Naive thymus-derived CD4-positive, alpha-beta T cell (primary cell): ENCODE measurements at regions of chr9 and their contacts with region 1.

Region 1: DNA sequence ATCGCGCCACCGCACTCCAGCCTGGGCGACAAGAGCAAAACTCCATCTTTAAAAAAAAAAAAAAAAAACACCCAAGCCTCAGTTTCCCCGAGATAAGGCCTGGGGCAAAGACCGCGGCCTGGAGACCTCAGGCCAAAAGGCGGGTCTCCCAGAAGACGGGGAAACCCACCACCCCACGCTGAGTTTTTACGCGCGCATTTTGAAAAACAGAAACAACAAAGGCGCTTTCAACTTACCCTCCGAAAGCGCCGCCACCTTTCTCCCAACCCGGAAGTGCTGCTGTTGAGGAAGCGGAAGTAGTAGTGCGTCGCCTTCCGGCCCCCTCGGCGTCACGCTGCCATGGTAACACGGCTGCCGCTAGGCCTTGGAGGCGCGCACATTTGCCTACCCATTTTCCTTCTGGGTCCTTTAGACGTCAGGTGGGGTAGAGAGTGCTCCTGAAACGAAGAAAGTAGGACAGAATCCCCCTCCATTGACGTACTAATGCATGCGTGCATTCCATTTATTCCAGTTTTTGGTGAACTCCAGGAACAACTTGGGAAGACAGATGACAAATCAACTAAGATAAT is at the start of gene TTF1:
- DNase-seq: peak; percentile 86 to 96 (median 93)
- ATAC-seq: peak; percentile 89
- H3K4me3 ChIP-seq: peak within 1 kb of the TSS; percentile 64
- H3K4me3 Mint-ChIP-seq: peak within 1 kb of the TSS; percentile 77 to 97 (median 92)
- H3K27ac ChIP-seq: peak within 1 kb of the TSS; percentile 74
- H3K27ac Mint-ChIP-seq: peak within 1 kb of the TSS; percentile 77 to 97 (median 90)
- H3K4me1 ChIP-seq: peaks cover 23 to 51% of the 10 kb centered on the region in 2 donors
- H3K4me1 Mint-ChIP-seq: peaks cover 42 to 62% (median 55%) of the 10 kb centered on the region in 7 donors
- H3K27me3 ChIP-seq: peaks cover 0 to 4% of the 10 kb centered on the region in 2 donors
- H3K27me3 Mint-ChIP-seq: peaks cover 10 to 27% (median 10%) of the 10 kb centered on the region in 5 donors
- total RNA-seq, gene TTF1: 10.6 to 26.0 (median 20.1) TPM

Region 2: DNA sequence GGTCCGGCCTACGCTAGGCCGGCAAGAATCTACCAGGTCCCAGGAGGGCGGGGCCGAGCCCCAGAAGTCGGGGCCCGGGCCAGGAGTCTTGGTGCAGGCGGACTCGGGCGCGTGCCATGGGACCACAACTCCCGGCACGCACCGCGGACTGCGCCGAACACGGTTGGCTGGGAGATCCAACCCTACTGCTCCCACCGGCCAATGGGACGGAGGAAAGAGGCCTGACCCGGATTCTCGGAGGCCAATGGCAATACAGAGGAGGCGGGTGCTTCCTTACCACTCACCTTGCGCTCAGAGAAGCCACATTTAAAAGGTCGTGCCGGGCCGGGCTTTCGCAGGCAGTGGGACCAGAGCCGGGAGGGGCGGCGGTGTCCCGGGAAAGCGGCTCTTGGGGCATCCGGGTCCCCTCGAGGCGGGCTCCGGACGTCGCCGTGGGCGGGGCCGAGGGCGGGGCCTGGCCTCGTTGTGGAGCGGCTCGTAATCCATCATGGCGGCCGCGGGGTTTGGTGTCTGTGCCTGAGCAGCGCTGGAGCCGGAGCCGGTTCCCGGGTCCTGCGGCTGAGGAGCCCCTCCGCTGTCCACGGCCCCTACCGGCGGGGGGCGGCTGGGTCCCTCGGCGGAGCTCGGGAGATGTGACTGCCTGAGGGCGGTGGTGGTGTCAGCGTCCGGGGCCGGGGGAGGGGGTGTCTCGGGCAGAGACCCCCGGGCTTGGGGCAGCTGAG is 1693.9 kb before region 1 on chr9:
- CTCF ChIA-PET with region 1: no interaction called
- POLR2A ChIA-PET with region 1: no interaction called
- intact Hi-C with region 1: loop called in 1 of 2 experiments (anchors 10 kb)
- DNase-seq: peak; percentile 92 to 97 (median 96)
- ATAC-seq: peak; percentile 98
- H3K4me3 ChIP-seq: peak overlapping the region; percentile 92
- H3K4me3 Mint-ChIP-seq: peak overlapping the region; percentile 90 to 99 (median 94)
- H3K27ac ChIP-seq: peak overlapping the region; percentile 99
- H3K27ac Mint-ChIP-seq: peak overlapping the region; percentile 91 to 97 (median 96)
- H3K4me1 ChIP-seq: peaks cover 22 to 31% of the 10 kb centered on the region in 2 donors
- H3K4me1 Mint-ChIP-seq: peaks cover 27 to 48% (median 37%) of the 10 kb centered on the region in 7 donors
- H3K27me3 ChIP-seq: no peaks in the 10 kb centered on the region
- H3K27me3 Mint-ChIP-seq: no peaks in the 10 kb centered on the region

Region 3: DNA sequence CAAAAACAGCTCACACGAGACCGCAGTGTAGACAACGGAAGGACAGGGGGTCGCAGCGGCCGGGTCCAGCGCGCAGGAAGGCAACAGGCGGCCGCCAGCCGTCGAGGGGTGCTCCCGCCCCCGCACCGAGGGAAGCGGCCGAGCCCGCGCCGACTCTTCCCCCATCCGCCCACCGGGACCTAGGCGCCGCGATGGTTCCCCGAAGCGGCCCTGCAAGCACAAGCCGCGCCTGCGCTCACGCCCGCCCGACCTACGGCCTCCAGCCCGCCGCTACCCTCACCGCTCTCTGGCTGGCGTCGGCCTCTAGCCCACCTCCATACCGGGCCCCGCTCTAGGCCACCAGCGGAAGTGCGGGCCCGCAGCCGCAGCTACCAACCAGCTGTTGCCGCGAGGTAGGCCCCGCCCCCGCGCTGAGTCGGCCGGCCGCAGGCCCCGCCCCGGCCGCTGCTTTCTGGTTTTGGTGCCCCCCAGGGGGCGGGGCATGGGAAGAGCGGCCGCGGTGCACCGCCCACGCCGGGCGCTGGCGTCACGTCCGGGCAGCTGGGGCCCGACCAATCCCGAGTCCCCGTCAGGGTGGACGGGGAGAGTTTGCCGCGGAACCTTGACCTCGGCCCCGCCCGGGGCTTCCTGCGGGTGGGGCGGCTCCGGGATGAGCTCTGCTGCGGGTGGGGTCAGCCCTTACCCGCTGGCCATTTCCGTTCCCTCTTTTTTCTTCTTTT is 51.8 kb before region 1 on chr9 and contains the start of gene SETX:
- CTCF ChIA-PET with region 1: no interaction called
- POLR2A ChIA-PET with region 1: interaction called, 5 read pairs
- intact Hi-C with region 1: loop called (anchors 1 kb)
- DNase-seq: peak; percentile 80 to 96 (median 88)
- ATAC-seq: peak; percentile 95
- H3K4me3 ChIP-seq: peak within 1 kb of the TSS; percentile 96
- H3K4me3 Mint-ChIP-seq: peak within 1 kb of the TSS; percentile 78 to 97 (median 94)
- H3K27ac ChIP-seq: peak within 1 kb of the TSS; percentile 94
- H3K27ac Mint-ChIP-seq: peak within 1 kb of the TSS; percentile 68 to 99 (median 97)
- H3K4me1 ChIP-seq: peaks cover 35 to 39% of the 10 kb centered on the region in 2 donors
- H3K4me1 Mint-ChIP-seq: peaks cover 24 to 48% (median 45%) of the 10 kb centered on the region in 7 donors
- H3K27me3 ChIP-seq: no peaks in the 10 kb centered on the region
- H3K27me3 Mint-ChIP-seq: peaks cover 0 to 3% (median 0%) of the 10 kb centered on the region in 5 donors
- total RNA-seq, gene SETX: 52.0 to 83.2 (median 70.2) TPM

Region 4: DNA sequence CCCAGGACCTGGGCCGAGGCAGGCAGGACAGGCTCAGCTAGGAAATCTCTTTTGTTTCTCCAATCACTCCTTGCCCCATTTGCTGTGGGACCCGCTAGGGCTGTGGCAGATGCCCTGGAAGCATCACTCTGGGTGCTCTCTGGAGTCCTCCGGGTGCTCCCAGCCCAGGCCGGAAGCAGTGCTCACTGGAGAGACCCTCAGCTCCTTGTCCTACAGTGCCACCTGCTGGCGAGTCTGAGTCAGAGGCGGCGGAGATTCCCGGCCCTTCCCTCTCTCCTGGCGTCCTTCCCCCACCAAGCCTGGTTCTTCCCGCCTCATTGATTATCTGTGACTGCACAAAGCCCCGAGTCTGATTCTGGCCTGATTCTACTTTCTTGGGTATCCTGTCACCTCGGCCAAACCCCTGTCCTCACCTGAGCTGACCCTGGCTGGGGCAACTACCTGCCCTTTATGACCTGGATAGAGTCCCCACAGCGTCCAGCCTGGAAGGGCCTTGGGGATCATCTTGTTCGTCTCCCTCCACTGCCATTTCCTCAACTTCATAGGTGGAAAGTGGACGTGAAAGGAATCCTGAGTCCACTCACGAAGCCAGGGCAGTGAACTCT is 168.5 kb after region 1 on chr9:
- CTCF ChIA-PET with region 1: no interaction called
- POLR2A ChIA-PET with region 1: no interaction called
- intact Hi-C with region 1: loop called in 1 of 2 experiments (anchors 1 kb)
- DNase-seq: peak in 2 of 9 donors; percentile 20 to 53
- ATAC-seq: peak; percentile 48
- H3K4me3 ChIP-seq: no peak overlapping the region
- H3K4me3 Mint-ChIP-seq: no peak overlapping the region
- H3K27ac ChIP-seq: no peak overlapping the region
- H3K27ac Mint-ChIP-seq: no peak overlapping the region
- H3K4me1 ChIP-seq: no peaks in the 10 kb centered on the region
- H3K4me1 Mint-ChIP-seq: peaks cover 0 to 2% (median 0%) of the 10 kb centered on the region in 7 donors
- H3K27me3 ChIP-seq: peaks cover 0 to 33% of the 10 kb centered on the region in 2 donors
- H3K27me3 Mint-ChIP-seq: peaks cover 52 to 69% (median 58%) of the 10 kb centered on the region in 5 donors

Region 5: GRCh38 chr9:132768932-132769905 is 362.6 kb after region 1 on chr9:
- CTCF ChIA-PET with region 1: no interaction called
- POLR2A ChIA-PET with region 1: interaction called, 3 read pairs
- intact Hi-C with region 1: loop called (anchors 1 to 10 kb)
- DNase-seq: peak in 8 of 9 donors; percentile 42 to 69 (median 60)
- ATAC-seq: peak; percentile 86
- H3K4me3 ChIP-seq: peak overlapping the region; percentile 86
- H3K4me3 Mint-ChIP-seq: peak overlapping the region; percentile 95 to 100 (median 98)
- H3K27ac ChIP-seq: peak overlapping the region; percentile 77
- H3K27ac Mint-ChIP-seq: peak overlapping the region; percentile 90 to 99 (median 97)
- H3K4me1 ChIP-seq: peaks cover 3 to 9% of the 10 kb centered on the region in 2 donors
- H3K4me1 Mint-ChIP-seq: peaks cover 8 to 37% (median 27%) of the 10 kb centered on the region in 7 donors
- H3K27me3 ChIP-seq: no peaks in the 10 kb centered on the region
- H3K27me3 Mint-ChIP-seq: peaks cover 0 to 20% (median 0%) of the 10 kb centered on the region in 5 donors

Region 6: GRCh38 chr9:132944302-132945185 is 537.9 kb after region 1 on chr9 and contains the start of gene TSC1:
- CTCF ChIA-PET with region 1: no interaction called
- POLR2A ChIA-PET with region 1: no interaction called
- intact Hi-C with region 1: loop called in 1 of 2 experiments (anchors 1 kb)
- DNase-seq: peak; percentile 96 to 99 (median 98)
- ATAC-seq: peak; percentile 94
- H3K4me3 ChIP-seq: peak within 1 kb of the TSS; percentile 93
- H3K4me3 Mint-ChIP-seq: peak within 1 kb of the TSS; percentile 90 to 99 (median 98)
- H3K27ac ChIP-seq: peak within 1 kb of the TSS; percentile 94
- H3K27ac Mint-ChIP-seq: peak within 1 kb of the TSS; percentile 99 to 100 (median 100)
- H3K4me1 ChIP-seq: peaks cover 8 to 14% of the 10 kb centered on the region in 2 donors
- H3K4me1 Mint-ChIP-seq: peaks cover 15 to 45% (median 27%) of the 10 kb centered on the region in 7 donors
- H3K27me3 ChIP-seq: no peaks in the 10 kb centered on the region
- H3K27me3 Mint-ChIP-seq: peaks cover 0 to 3% (median 0%) of the 10 kb centered on the region in 5 donors
- total RNA-seq, gene TSC1: 38.1 to 98.3 (median 59.6) TPM